CD4-positive, alpha-beta memory T cell (primary cell): ENCODE measurements at regions of chr2 and their contacts with region 1.

Region 1: GRCh38 chr2:43977677-43978375 is 18.0 kb downstream of the LRPPRC start:
- DNase-seq: no peak
- H3K4me3 ChIP-seq: no peak overlapping the region
- H3K4me3 Mint-ChIP-seq: no peak overlapping the region
- H3K27ac ChIP-seq: no peak overlapping the region
- H3K27ac Mint-ChIP-seq: peak overlapping the region in 2 of 7 donors; percentile 51 to 68
- H3K4me1 ChIP-seq: no peaks in the 10 kb centered on the region
- H3K4me1 Mint-ChIP-seq: peaks cover 0 to 7% (median under 1%) of the 10 kb centered on the region in 4 donors
- H3K27me3 ChIP-seq: no peaks in the 10 kb centered on the region
- H3K27me3 Mint-ChIP-seq: no peaks in the 10 kb centered on the region

Region 2: GRCh38 chr2:42028571-42029148 is 1949.2 kb before region 1 on chr2:
- CTCF ChIA-PET with region 1: no interaction called
- POLR2A ChIA-PET with region 1: no interaction called
- intact Hi-C with region 1: no loop called
- DNase-seq: no peak
- H3K4me3 ChIP-seq: no peak overlapping the region
- H3K4me3 Mint-ChIP-seq: no peak overlapping the region
- H3K27ac ChIP-seq: no peak overlapping the region
- H3K27ac Mint-ChIP-seq: no peak overlapping the region
- H3K4me1 ChIP-seq: no peaks in the 10 kb centered on the region
- H3K4me1 Mint-ChIP-seq: peaks cover 0 to 4% (median 2%) of the 10 kb centered on the region in 4 donors
- H3K27me3 ChIP-seq: no peaks in the 10 kb centered on the region
- H3K27me3 Mint-ChIP-seq: peaks cover 17% of the 10 kb centered on the region in 2 donors

Region 3: GRCh38 chr2:43943809-43944452 is 33.9 kb before region 1 on chr2:
- CTCF ChIA-PET with region 1: no interaction called
- POLR2A ChIA-PET with region 1: no interaction called
- intact Hi-C with region 1: loop called (anchors 5 kb)
- DNase-seq: no peak
- H3K4me3 ChIP-seq: no peak overlapping the region
- H3K4me3 Mint-ChIP-seq: no peak overlapping the region
- H3K27ac ChIP-seq: no peak overlapping the region
- H3K27ac Mint-ChIP-seq: peak overlapping the region in 1 of 7 donors; percentile 7
- H3K4me1 ChIP-seq: no peaks in the 10 kb centered on the region
- H3K4me1 Mint-ChIP-seq: peaks cover 0 to 2% (median 0%) of the 10 kb centered on the region in 4 donors
- H3K27me3 ChIP-seq: no peaks in the 10 kb centered on the region
- H3K27me3 Mint-ChIP-seq: no peaks in the 10 kb centered on the region

Region 4: GRCh38 chr2:44230378-44230777 is 252.6 kb after region 1 on chr2:
- CTCF ChIA-PET with region 1: no interaction called
- POLR2A ChIA-PET with region 1: no interaction called
- intact Hi-C with region 1: no loop called
- DNase-seq: no peak
- H3K4me3 ChIP-seq: no peak overlapping the region
- H3K4me3 Mint-ChIP-seq: no peak overlapping the region
- H3K27ac ChIP-seq: no peak overlapping the region
- H3K27ac Mint-ChIP-seq: peak overlapping the region in 5 of 7 donors; percentile 19 to 62 (median 47)
- H3K4me1 ChIP-seq: no peaks in the 10 kb centered on the region
- H3K4me1 Mint-ChIP-seq: peaks cover 7 to 13% (median 10%) of the 10 kb centered on the region in 4 donors
- H3K27me3 ChIP-seq: no peaks in the 10 kb centered on the region
- H3K27me3 Mint-ChIP-seq: no peaks in the 10 kb centered on the region